ENCODE measurements at regions of chr20 and their contacts with region 1.

Region 1: DNA sequence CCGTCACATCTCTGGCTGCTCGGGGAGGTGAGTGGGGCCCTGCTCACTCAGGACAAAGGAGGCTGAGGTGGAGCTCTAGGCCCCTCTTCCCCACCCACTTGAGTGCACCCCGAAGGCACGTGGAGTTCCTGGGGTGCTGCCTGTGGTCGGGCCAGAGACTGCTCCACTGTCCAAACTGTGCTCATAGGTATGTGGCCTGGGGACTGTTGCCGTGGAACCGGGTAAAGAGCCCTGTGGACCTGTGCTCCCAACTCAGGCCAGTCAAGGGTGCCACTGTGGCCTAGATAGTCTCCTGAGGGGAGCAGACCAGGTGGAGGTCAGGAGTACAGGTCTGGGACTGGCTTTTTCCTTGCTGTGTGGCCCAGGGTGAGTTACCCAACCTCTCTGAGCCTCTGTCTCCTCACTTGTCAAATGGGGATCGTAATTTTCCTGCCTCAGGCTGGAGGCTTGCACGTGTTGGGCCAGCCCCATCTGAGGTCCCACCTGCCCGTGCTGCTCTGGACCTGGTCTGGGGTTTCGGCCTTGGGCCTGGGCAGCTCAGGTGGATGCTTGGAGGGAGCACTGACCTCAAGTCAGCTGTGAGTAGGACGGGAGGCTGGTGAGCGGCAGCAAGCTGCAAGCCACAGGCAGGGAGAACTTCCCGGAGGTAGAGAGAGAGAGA is 12.4 kb upstream of the NPBWR2 start:
- DNase-seq: peak in 4 of 5 donors; percentile 15 to 42 (median 18)
- ATAC-seq: peak in 3 of 4 donors; percentile 25 to 40 (median 29)
- H3K4me3 ChIP-seq: peak overlapping the region in 3 of 12 donors; percentile 30 to 41 (median 40)
- H3K27ac ChIP-seq: no peak overlapping the region
- H3K4me1 ChIP-seq: peaks cover 0 to 9% (median 0%) of the 10 kb centered on the region in 12 donors
- H3K27me3 ChIP-seq: peaks cover 0 to 31% (median 14%) of the 10 kb centered on the region in 9 donors
- CTCF ChIP-seq: no peak
- POLR2A ChIP-seq: no peak

Region 2: DNA sequence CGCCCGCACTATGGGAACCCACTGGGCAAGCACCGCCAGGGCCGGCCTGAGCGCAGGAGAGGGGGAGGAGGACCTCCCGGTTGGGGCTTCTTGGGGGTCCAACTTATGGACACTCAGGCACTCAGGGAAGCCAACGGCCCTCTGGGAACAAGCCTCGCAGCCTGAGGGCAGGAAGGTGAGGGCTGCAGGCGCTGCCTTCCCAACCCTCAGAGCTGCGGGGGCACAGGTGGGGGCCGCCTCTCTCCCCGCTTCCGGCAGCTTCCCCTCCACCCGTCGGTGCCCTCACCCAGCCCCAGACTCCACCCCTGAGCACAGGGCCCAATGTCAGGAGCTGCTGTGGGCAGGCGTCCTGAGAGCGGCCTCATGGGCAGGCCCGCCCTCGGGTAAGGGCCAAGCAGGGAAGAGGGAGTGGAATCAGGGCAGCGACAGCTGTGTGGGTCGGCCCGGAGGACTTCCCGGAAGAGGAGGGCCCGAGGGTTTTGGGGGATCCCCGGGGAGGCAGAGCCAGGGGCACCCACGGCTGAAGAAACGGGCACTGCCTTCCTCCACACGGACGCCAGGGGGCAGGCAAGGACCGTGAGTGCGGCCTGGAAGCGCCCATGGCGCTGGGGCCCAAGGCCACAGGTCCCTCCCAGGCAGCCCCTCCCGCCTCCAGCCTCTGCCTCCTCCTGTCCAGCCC is 582.1 kb before region 1 on chr20:
- intact Hi-C with region 1: loop called in 2 of 10 experiments (anchors 5 to 10 kb)
- DNase-seq: peak; percentile 80 to 95 (median 87)
- ATAC-seq: peak; percentile 84 to 90 (median 87)
- H3K4me3 ChIP-seq: peak overlapping the region in 10 of 12 donors; percentile 15 to 51 (median 38)
- H3K27ac ChIP-seq: peak overlapping the region in 7 of 12 donors; percentile 12 to 91 (median 39)
- H3K4me1 ChIP-seq: peaks cover 0 to 28% (median 13%) of the 10 kb centered on the region in 12 donors
- H3K27me3 ChIP-seq: peaks cover 0 to 41% (median 2%) of the 10 kb centered on the region in 9 donors
- CTCF ChIP-seq: peak; percentile 94 to 98 (median 96)
- POLR2A ChIP-seq: no peak

Region 3: GRCh38 chr20:63980806-63981728 is 138.7 kb before region 1 on chr20 and contains the start of gene PRPF6:
- intact Hi-C with region 1: loop called in 3 of 10 experiments (anchors 5 kb)
- DNase-seq: peak; percentile 95 to 98 (median 97)
- ATAC-seq: peak; percentile 88 to 94 (median 90)
- H3K4me3 ChIP-seq: peak within 1 kb of the TSS; percentile 73 to 100 (median 93)
- H3K27ac ChIP-seq: peak within 1 kb of the TSS; percentile 53 to 93 (median 86)
- H3K4me1 ChIP-seq: peaks cover 7 to 45% (median 35%) of the 10 kb centered on the region in 12 donors
- H3K27me3 ChIP-seq: no peaks in the 10 kb centered on the region
- CTCF ChIP-seq: peak; percentile 66 to 98 (median 89)
- POLR2A ChIP-seq: peak in 1 of 2 donors; percentile 72
- total RNA-seq, gene PRPF6: 41.4 to 62.6 (median 47.6) TPM

Region 4: DNA sequence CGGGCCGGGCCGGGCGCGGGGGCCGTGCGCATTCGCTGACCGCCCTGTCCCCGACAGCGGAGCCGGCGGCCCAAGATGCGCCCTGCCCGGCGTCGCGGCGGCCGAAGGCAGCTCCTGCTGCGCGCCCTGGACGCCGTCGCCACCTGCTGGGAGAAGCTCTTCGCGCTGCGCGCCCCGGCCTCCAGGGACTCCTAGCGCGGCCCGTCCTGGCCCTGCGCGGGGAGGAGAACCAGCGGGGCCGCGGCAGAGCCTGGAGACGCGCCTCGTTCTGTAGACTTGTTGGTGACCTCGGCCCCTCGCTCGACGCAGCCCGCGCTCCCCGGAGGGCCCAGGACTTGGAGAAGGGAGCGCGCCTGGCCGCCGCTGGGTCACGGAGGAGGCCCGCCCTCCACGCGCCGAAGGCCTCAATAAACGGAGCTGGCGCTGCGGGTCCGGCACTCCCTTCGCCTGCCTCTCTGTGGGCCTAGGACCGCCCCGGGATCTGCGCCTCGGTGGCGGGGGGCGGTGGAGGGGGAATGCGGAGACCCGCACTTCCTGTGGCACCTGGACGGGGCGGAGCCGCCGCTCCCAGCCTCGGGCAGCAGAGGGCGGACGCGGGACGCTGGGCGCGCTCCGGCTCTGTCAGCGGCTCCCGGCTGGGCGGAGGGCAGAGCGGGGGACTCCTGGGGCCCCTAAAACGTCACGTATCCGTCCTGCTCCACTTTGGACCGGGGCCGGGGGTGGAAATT is 81.1 kb before region 1 on chr20:
- intact Hi-C with region 1: loop called in 7 of 10 experiments (anchors 2 to 10 kb)
- DNase-seq: peak; percentile 80 to 92 (median 87)
- ATAC-seq: peak; percentile 77 to 89 (median 83)
- H3K4me3 ChIP-seq: peak overlapping the region; percentile 9 to 62 (median 56)
- H3K27ac ChIP-seq: peak overlapping the region; percentile 64 to 93 (median 84)
- H3K4me1 ChIP-seq: peaks cover 8 to 74% (median 36%) of the 10 kb centered on the region in 12 donors
- H3K27me3 ChIP-seq: peaks cover 0 to 64% (median 44%) of the 10 kb centered on the region in 9 donors
- CTCF ChIP-seq: peak; percentile 66 to 81 (median 74)
- POLR2A ChIP-seq: no peak

Region 5: GRCh38 chr20:64084685-64085152 is 35.1 kb before region 1 on chr20:
- intact Hi-C with region 1: loop called in 8 of 10 experiments (anchors 1 to 5 kb)
- DNase-seq: no peak
- ATAC-seq: no peak
- H3K4me3 ChIP-seq: no peak overlapping the region
- H3K27ac ChIP-seq: no peak overlapping the region
- H3K4me1 ChIP-seq: peaks cover 0 to 35% (median 14%) of the 10 kb centered on the region in 12 donors
- H3K27me3 ChIP-seq: peaks cover 3 to 24% (median 18%) of the 10 kb centered on the region in 9 donors
- CTCF ChIP-seq: no peak
- POLR2A ChIP-seq: no peak

Region 6: GRCh38 chr20:64164123-64164836 is 44.5 kb after region 1 on chr20 and contains the start of gene MYT1:
- intact Hi-C with region 1: no loop called
- DNase-seq: no peak
- ATAC-seq: no peak
- H3K4me3 ChIP-seq: no peak within 1 kb of the TSS
- H3K27ac ChIP-seq: no peak within 1 kb of the TSS
- H3K4me1 ChIP-seq: peaks cover 0 to 4% (median 0%) of the 10 kb centered on the region in 12 donors
- H3K27me3 ChIP-seq: peaks cover 16 to 96% (median 61%) of the 10 kb centered on the region in 9 donors
- CTCF ChIP-seq: no peak
- POLR2A ChIP-seq: no peak
- total RNA-seq, gene MYT1: 0.07 to 0.23 (median 0.09) TPM in 5 of 9 donors, not detected in the others

Measured in heart left ventricle (tissue), 16 donors.